Panc1 (cell line): ENCODE measurements at regions of chr13 and their contacts with region 1.

Region 1: DNA sequence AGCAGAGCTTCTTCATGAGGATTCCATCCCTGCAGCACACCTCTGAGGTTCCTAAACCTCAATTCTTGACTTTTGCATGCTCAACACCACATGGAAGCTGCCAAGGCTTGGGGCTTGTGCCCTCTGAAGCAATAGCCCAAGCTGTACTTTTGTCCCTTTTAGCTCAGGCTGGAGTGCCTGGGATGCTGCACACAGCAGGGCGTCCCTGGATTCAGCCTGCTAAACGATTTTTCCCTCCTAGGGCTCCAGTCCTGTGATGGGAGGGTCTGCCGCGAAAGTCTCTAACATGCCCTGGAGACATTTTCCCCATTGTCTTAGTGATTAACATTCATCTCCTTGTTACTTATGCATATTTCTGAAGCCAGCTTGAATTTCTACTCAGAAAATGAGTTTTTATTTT is 98.3 kb downstream of the SLITRK5 start:
- DNase-seq: no peak
- ATAC-seq: no peak
- H3K4me3 ChIP-seq: no peak overlapping the region
- H3K27ac ChIP-seq: no peak overlapping the region
- H3K4me1 ChIP-seq: no peaks in the 10 kb centered on the region
- H3K27me3 ChIP-seq: no peaks in the 10 kb centered on the region
- CTCF ChIP-seq: no peak

Region 2: DNA sequence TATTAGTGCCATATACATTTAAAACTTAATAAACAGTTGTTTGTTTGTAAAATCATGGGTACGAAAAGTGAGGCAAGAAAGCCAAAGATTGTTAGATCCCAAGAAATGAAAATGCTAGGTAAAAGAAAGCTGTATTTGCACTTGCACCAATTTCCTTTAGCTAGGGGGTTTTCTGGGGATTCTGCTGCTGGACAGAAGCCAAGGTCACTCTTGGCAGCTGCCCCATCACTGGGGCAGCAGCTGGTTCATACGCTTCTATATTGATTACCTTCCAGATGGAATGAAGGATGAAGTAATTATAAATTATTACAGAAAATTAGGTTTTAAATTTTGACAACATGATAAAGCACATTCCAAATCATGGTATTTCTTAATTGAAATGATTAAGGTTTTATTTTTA is 29.1 kb after region 1 on chr13:
- CTCF ChIA-PET with region 1: no interaction called
- POLR2A ChIA-PET with region 1: no interaction called
- in situ Hi-C with region 1: no loop called
- intact Hi-C with region 1: loop called (anchors 2 kb)
- DNase-seq: no peak
- ATAC-seq: no peak
- H3K4me3 ChIP-seq: no peak overlapping the region
- H3K27ac ChIP-seq: no peak overlapping the region
- H3K4me1 ChIP-seq: no peaks in the 10 kb centered on the region
- H3K27me3 ChIP-seq: no peaks in the 10 kb centered on the region
- CTCF ChIP-seq: no peak